AG04449 (cell line): ENCODE measurements at regions of chr7 and their contacts with region 1.

Region 1: GRCh38 chr7:105759670-105760550 is 116.5 kb downstream of the ATXN7L1 start:
- DNase-seq: no peak
- H3K4me3 ChIP-seq: no peak overlapping the region
- CTCF ChIP-seq: peak; percentile 36

Region 2: GRCh38 chr7:105439174-105439893 is 320.6 kb before region 1 on chr7:
- CTCF ChIA-PET with region 1: no interaction called
- POLR2A ChIA-PET with region 1: no interaction called
- DNase-seq: peak; percentile 76
- H3K4me3 ChIP-seq: no peak overlapping the region
- CTCF ChIP-seq: no peak

Region 3: DNA sequence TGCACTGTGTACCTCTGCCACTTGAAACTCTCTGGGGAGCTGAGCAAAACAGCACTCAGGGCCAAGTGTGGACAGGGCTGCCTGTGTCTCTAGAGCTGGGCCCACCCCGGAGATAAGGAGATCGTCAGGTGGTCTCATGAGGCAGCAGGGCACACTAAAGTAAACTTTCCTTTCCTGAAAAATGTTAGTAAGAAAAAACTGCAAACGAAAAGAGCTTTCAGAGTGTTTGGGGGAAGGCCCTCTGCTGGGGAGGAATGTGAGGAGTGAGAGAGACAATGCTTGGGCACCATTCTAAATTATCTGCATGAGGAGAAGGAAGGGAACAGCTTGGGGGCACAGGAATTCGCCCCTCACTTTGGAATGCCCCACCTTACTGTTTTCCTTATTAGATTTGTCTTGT is 11.2 kb before region 1 on chr7:
- CTCF ChIA-PET with region 1: interaction called, 78 read pairs
- POLR2A ChIA-PET with region 1: interaction called, 3 read pairs
- DNase-seq: no peak
- H3K4me3 ChIP-seq: no peak overlapping the region
- CTCF ChIP-seq: no peak

Region 4: GRCh38 chr7:105876091-105876963 is 116.4 kb after region 1 on chr7 and contains the start of gene ATXN7L1:
- CTCF ChIA-PET with region 1: interaction called, 11 read pairs
- POLR2A ChIA-PET with region 1: no interaction called
- DNase-seq: peak; percentile 77
- H3K4me3 ChIP-seq: peak within 1 kb of the TSS; percentile 76
- CTCF ChIP-seq: peak; percentile 36

Region 5: DNA sequence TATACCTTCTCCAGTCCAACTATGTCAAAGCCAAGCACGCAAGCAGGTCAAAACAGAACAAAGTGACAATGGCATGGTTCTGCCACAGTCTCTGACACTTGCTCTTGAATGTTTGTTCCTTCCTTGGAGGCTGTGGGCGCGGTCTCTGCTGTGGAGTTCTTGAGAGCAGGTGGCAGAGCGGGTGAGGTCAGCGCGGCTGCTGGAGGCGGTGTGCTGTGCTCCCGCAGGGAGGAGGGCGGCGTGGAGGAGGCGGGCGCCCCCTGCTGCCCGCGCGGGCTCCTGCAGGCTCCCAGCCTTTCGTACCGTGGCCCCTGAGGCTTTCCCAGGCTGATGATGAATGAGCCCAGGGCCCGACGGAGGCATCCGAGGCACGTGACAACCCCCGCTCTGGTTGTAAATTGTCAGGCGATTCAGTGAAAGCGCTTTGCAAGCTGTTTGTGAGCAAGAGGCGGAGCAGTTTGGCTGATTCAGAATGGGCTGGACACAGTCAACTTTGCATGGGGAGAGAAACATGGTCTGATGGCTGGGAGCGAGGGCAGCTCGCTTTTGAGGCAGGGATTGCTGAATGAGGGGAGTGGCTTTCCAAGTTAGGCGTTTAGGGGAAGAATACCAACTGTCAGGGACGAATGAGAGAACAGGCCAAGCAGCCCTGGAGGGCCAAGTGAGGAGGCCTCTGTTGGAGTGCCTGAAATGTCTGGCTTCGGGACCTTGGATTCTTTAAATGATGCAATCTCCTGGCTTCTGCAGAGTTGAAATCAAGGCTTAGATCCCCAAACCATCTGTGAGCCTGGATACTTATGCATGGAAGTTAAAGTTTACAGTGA is 249.7 kb after region 1 on chr7:
- CTCF ChIA-PET with region 1: interaction called, 52 read pairs
- POLR2A ChIA-PET with region 1: no interaction called
- DNase-seq: peak; percentile 92
- H3K4me3 ChIP-seq: peak overlapping the region; percentile 15; the same call in 1 of the 2 replicates
- CTCF ChIP-seq: peak; percentile 98

Region 6: DNA sequence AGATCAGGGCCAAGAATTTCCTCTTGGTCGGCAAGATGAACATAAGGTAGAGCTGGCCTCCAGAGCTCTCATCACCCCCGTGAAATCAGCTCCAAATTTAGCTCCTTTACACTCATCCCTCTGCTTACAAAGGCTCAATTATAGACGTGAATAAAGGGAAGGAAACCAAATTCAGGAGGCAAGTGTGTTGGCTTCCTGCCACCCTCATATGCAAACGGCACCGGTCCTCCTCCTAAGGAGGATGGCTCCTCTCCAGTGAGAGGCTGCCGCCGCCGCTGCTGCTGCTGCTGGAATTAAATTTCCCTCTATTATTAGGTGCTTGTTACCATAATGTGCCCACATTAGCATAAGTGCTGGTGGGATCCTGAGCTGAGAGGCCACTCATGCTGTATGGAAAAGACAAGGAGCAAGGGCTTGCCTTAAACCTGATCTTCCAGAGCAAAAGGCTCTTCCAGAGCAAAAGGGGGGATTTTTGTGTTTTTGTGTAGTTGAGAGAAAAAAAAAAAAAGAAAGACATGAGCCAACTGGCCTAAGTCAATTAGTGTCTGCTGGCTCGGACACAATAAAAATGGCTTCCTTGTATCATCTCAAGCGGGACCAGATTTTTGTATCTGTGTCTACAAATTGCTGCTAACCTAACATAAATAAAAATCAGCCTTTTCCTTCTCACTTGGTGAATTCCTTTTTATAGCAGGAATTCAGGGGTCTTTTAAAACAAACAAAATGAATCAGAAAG is 271.6 kb after region 1 on chr7:
- CTCF ChIA-PET with region 1: interaction called, 319 read pairs
- POLR2A ChIA-PET with region 1: no interaction called
- DNase-seq: no peak
- H3K4me3 ChIP-seq: no peak overlapping the region
- CTCF ChIP-seq: no peak

Region 7: DNA sequence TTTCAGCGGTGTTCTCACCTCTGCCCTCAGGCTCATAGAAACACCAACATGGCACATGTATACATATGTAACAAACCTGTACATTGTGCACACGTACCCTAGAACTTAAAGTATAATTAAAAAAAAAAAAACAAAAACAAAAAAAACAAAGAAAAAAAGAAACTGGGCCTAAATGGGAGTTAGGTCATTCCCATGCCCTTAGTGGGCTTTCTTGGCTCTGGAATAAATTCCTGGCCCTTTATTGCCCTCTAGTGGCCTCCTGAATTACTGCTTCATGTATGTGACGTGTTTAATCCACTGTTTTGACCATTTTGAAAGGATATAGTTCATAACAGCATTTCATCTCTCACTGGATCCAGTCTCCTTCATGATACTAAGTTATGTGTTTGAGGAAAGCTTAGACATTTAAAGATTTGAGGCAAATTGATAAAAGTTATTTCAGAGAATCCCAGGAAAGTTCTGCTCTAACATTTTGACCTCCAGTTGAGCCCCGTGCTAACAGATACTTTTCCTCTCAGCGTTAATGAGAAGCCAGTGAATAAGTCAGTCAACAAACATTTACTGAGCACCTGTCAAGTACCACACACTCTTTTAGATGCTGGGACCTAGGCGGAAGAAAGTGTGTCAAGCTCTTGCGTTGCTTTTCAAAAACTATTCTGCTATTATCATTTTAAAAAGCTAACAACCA is 406.9 kb after region 1 on chr7:
- CTCF ChIA-PET with region 1: interaction called, 13 read pairs
- POLR2A ChIA-PET with region 1: no interaction called
- DNase-seq: no peak
- H3K4me3 ChIP-seq: no peak overlapping the region
- CTCF ChIP-seq: peak; percentile 68